Heart right ventricle (tissue), 16 donors: ENCODE measurements at regions of chr7 and their contacts with region 1.

Region 1: GRCh38 chr7:146655928-146656797 is 539.6 kb downstream of the CNTNAP2 start:
- DNase-seq: no peak
- ATAC-seq: no peak
- H3K4me3 ChIP-seq: no peak overlapping the region
- H3K27ac ChIP-seq: no peak overlapping the region
- H3K4me1 ChIP-seq: no peaks in the 10 kb centered on the region
- H3K27me3 ChIP-seq: no peaks in the 10 kb centered on the region
- CTCF ChIP-seq: no peak

Region 2: GRCh38 chr7:146591976-146592375 is 64.2 kb before region 1 on chr7:
- intact Hi-C with region 1: loop called in 1 of 10 experiments (anchors 10 kb)
- DNase-seq: no peak
- ATAC-seq: no peak
- H3K4me3 ChIP-seq: no peak overlapping the region
- H3K27ac ChIP-seq: no peak overlapping the region
- H3K4me1 ChIP-seq: no peaks in the 10 kb centered on the region
- H3K27me3 ChIP-seq: no peaks in the 10 kb centered on the region
- CTCF ChIP-seq: no peak